Activated CD8-positive, alpha-beta T cell treated with anti-CD3 and anti-CD28 coated beads for 36 hours (primary cell): ENCODE measurements at regions of chr19 and their contacts with region 1.

Region 1: GRCh38 chr19:41563854-41564514 is 12.0 kb upstream of the CEACAM21 start:
- DNase-seq: peak; percentile 75
- ATAC-seq: peak; percentile 80
- H3K4me3 Mint-ChIP-seq: peak overlapping the region; percentile 68
- H3K27ac Mint-ChIP-seq: peak overlapping the region; percentile 66
- H3K4me1 Mint-ChIP-seq: peaks cover 45% of the 10 kb centered on the region
- H3K27me3 Mint-ChIP-seq: peaks cover 18% of the 10 kb centered on the region
- CTCF ChIP-seq: no peak

Region 2: GRCh38 chr19:41505105-41505504 is 58.9 kb before region 1 on chr19:
- CTCF ChIA-PET with region 1: no interaction called
- POLR2A ChIA-PET with region 1: no interaction called
- intact Hi-C with region 1: no loop called
- DNase-seq: no peak
- ATAC-seq: no peak
- H3K4me3 Mint-ChIP-seq: no peak overlapping the region
- H3K27ac Mint-ChIP-seq: no peak overlapping the region
- H3K4me1 Mint-ChIP-seq: peaks cover 3% of the 10 kb centered on the region
- H3K27me3 Mint-ChIP-seq: peaks cover 12% of the 10 kb centered on the region
- CTCF ChIP-seq: no peak

Region 3: DNA sequence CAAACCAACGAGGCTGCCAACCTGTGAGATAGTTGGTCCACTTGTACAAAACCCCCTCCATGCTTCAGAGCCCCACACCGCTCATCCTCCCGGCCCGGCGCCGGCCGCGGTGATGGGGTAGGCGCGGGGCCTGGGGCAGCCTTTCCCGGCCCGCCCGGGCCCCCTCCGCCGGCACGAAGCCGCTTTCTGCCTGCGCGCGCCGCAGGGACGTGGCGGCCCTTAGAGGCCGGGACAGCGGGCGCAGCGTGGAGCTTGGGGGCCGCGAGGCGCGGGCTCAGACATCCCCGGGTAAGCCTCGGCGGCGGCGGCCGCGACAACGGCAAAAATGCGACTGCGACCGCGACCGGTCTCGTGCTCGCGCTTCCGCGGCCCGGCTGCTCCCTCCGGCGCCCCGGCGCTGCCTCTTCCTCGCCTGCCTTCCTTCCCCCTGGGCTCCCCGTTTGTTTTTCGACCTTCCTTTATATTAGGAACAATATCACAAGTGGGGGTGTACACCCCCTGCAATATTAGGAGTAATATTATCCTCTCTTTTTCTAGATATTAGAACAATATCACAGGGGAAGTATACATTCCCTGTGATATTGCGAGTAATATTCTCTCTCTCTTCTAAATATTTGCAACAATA is 41.9 kb before region 1 on chr19:
- CTCF ChIA-PET with region 1: interaction called, 5 read pairs
- POLR2A ChIA-PET with region 1: no interaction called
- intact Hi-C with region 1: loop called (anchors 5 kb)
- DNase-seq: peak; percentile 59
- ATAC-seq: peak; percentile 63
- H3K4me3 Mint-ChIP-seq: peak overlapping the region; percentile 72
- H3K27ac Mint-ChIP-seq: peak overlapping the region; percentile 81
- H3K4me1 Mint-ChIP-seq: peaks cover 21% of the 10 kb centered on the region
- H3K27me3 Mint-ChIP-seq: peaks cover 38% of the 10 kb centered on the region
- CTCF ChIP-seq: peak; percentile 27

Region 4: GRCh38 chr19:41531438-41532311 is 32.3 kb before region 1 on chr19:
- CTCF ChIA-PET with region 1: interaction called, 19 read pairs
- POLR2A ChIA-PET with region 1: interaction called, 3 read pairs
- intact Hi-C with region 1: no loop called
- DNase-seq: peak; percentile 92
- ATAC-seq: peak; percentile 75
- H3K4me3 Mint-ChIP-seq: peak overlapping the region; percentile 81
- H3K27ac Mint-ChIP-seq: peak overlapping the region; percentile 93
- H3K4me1 Mint-ChIP-seq: peaks cover 74% of the 10 kb centered on the region
- H3K27me3 Mint-ChIP-seq: peaks cover 24% of the 10 kb centered on the region
- CTCF ChIP-seq: no peak

Region 5: GRCh38 chr19:41541990-41542584 is 21.9 kb before region 1 on chr19:
- CTCF ChIA-PET with region 1: interaction called, 38 read pairs
- POLR2A ChIA-PET with region 1: interaction called, 26 read pairs
- intact Hi-C with region 1: no loop called
- DNase-seq: peak; percentile 88
- ATAC-seq: peak; percentile 9
- H3K4me3 Mint-ChIP-seq: peak overlapping the region; percentile 7
- H3K27ac Mint-ChIP-seq: peak overlapping the region; percentile 64
- H3K4me1 Mint-ChIP-seq: peaks cover 51% of the 10 kb centered on the region
- H3K27me3 Mint-ChIP-seq: peaks cover 5% of the 10 kb centered on the region
- CTCF ChIP-seq: peak; percentile 74

Region 6: GRCh38 chr19:41548954-41549688 is 14.9 kb before region 1 on chr19:
- CTCF ChIA-PET with region 1: interaction called, 38 read pairs
- POLR2A ChIA-PET with region 1: interaction called, 26 read pairs
- intact Hi-C with region 1: no loop called
- DNase-seq: peak; percentile 79
- ATAC-seq: peak; percentile 72
- H3K4me3 Mint-ChIP-seq: peak overlapping the region; percentile 87
- H3K27ac Mint-ChIP-seq: peak overlapping the region; percentile 96
- H3K4me1 Mint-ChIP-seq: peaks cover 47% of the 10 kb centered on the region
- H3K27me3 Mint-ChIP-seq: no peaks in the 10 kb centered on the region
- CTCF ChIP-seq: no peak

Region 7: GRCh38 chr19:41597600-41598041 is 33.6 kb after region 1 on chr19:
- CTCF ChIA-PET with region 1: interaction called, 13 read pairs
- POLR2A ChIA-PET with region 1: no interaction called
- intact Hi-C with region 1: no loop called
- DNase-seq: peak; percentile 89
- ATAC-seq: peak; percentile 87
- H3K4me3 Mint-ChIP-seq: no peak overlapping the region
- H3K27ac Mint-ChIP-seq: no peak overlapping the region
- H3K4me1 Mint-ChIP-seq: peaks cover 7% of the 10 kb centered on the region
- H3K27me3 Mint-ChIP-seq: peaks cover 26% of the 10 kb centered on the region
- CTCF ChIP-seq: peak; percentile 95

Region 8: GRCh38 chr19:42132851-42133528 is 569.0 kb after region 1 on chr19:
- CTCF ChIA-PET with region 1: no interaction called
- POLR2A ChIA-PET with region 1: no interaction called
- intact Hi-C with region 1: no loop called
- DNase-seq: peak; percentile 81
- ATAC-seq: peak; percentile 74
- H3K4me3 Mint-ChIP-seq: peak overlapping the region; percentile 78
- H3K27ac Mint-ChIP-seq: peak overlapping the region; percentile 79
- H3K4me1 Mint-ChIP-seq: peaks cover 40% of the 10 kb centered on the region
- H3K27me3 Mint-ChIP-seq: no peaks in the 10 kb centered on the region
- CTCF ChIP-seq: peak; percentile 99